ENCODE measurements at regions of chr5 and their contacts with region 1.

Region 1: GRCh38 chr5:156584528-156585270 is 257.7 kb downstream of the SGCD start:
- DNase-seq: no peak

Region 2: DNA sequence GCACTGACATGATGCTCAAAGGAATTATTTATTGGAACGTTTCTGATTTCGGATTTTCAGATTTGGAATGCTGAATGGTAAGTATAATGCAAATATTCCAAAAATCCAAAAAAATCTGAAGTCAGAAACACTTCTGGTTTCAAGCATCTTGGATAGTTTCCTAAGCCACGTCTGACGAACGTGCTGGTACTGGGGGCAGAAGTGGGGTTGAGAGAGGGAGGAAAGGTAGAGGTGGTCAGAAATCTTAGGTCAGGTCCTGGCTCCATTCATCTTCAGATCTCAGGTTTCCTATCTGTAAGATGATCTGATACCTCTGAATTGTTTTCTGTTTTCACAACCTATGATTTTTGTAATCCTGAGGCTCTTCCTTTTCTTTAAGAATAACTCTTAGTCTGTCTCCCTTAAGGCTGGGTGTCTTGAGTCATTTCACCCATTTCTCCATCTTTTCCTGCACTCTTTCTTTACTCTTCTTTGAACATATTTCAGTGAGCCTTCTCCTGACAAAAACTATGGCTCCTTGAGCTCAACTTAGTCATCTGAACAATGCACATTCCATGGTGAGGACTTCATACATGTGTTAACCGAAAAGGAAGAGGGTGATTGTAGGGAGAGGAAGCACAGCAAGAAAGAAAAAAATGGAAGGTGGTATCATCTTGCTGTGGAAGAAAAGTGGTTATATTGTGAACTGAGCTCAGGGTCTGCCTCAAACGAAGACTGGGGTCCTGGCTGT is 254.4 kb before region 1 on chr5:
- intact Hi-C with region 1: loop called in 1 of 2 experiments (anchors 10 kb)
- DNase-seq: no peak

Region 3: GRCh38 chr5:156513123-156513815 is 71.4 kb before region 1 on chr5:
- intact Hi-C with region 1: loop called in 1 of 2 experiments (anchors 2 kb)
- DNase-seq: no peak

Region 4: DNA sequence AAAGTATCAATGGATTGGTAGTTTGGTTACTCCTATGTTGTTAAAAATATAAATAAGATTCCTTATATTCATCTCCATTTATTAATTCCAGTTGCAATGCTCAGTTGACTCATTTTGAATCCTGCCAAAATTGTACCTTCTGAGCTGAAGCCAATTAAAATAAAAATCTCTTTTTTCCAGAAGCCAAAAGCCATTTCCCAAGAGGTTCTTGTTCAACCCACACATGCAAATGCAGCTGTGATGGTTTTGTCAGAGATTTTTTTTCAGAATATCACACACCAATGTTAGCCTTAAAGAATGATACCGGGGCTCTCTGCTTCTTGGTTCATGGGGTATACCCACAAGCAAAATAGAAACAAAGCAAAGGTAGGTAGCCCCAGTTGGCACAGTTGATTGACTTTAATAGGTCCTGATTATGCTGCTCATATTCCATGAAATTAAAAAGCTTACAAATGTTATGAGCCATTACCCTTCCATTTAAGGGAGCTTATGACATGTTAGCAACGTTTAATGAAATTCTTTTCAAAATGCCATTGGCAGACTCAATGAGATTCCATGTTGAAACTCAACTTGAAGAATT is 49.7 kb before region 1 on chr5:
- intact Hi-C with region 1: no loop called
- DNase-seq: no peak

Region 5: GRCh38 chr5:156623381-156624040 is 38.8 kb after region 1 on chr5:
- intact Hi-C with region 1: no loop called
- DNase-seq: no peak

Region 6: DNA sequence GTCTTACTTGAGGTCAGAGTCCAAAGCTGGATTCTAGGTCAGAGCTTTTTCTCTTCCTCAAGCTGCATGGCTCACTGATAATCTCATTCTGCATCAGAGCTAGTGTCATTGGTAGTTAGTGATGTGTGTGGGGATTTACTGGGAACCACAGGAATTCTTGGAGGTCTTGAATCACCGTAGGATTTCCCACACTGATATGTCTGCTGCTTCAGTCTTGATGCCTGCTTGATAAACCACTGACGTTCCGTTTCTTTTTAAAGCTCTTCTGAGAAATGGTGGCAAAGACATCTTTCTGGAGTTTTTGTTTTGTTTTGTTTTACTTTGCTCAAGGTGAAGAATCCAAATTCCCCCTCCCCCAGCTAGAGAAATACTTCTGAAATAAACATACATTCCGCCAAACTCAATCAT is 582.5 kb after region 1 on chr5:
- intact Hi-C with region 1: no loop called
- DNase-seq: no peak

Measured in posterior vena cava (tissue), 2 donors.